ENCODE measurements at regions of chr12 and their contacts with region 1.

Region 1: DNA sequence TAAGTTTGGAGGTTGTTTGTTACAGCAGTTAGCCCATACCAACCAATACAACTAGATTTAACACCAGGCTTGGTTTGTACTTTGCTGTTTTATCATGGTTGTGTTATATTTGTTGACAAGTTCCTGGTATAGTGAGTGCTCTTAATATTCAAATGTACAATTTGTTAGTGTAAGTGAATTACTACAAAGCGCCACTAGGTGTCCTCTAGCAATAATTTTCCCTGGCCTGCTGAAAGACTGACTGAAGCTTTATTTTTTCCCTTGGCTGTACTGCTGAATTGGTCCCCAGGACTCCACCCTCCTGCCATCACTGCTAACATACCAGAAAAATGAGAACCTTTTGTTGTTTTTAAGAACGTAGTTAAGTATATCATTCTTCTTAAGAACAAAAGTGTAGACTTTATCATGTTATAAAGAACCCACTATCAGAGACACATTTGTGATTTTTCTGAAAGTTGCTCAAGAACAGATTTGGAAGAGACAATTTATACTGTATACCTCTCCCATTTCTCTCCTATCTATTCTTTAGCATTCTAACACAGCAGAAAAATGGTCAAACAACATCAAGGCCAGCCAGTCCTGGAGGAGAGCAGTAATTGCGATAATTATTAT is 75.3 kb upstream of the FAR2 start:
- DNase-seq: peak; percentile 42
- H3K4me3 ChIP-seq: no peak overlapping the region
- H3K27ac ChIP-seq: no peak overlapping the region
- H3K4me1 ChIP-seq: no peaks in the 10 kb centered on the region; a peak in 2 of 4 replicates
- H3K27me3 ChIP-seq: no peaks in the 10 kb centered on the region
- CTCF ChIP-seq: peak; percentile 71
- EP300 ChIP-seq: no peak
- RAD21 ChIP-seq: peak; percentile 83

Region 2: DNA sequence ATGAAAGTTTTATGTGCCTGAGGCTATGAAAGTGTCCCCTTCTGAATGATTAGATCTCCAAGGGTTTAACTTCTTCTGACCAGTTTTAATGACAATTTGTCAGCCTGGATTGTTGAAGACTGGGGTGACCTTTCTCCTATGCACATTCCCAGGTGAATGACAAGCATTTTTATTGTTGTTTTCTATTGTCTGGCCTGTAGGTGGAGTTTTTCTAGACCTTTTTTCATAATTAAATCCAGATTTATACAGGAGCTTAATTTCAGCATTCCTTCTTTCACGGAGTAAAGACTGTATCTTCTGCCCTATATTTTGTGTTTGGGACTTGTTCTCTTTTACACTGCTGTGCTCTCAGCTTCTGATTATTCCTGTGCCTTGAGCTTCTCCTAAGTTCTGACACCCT is 49.6 kb before region 1 on chr12:
- CTCF ChIA-PET with region 1: interaction called, 10 read pairs
- POLR2A ChIA-PET with region 1: no interaction called
- DNase-seq: peak; percentile 8
- H3K4me3 ChIP-seq: no peak overlapping the region
- H3K27ac ChIP-seq: no peak overlapping the region
- H3K4me1 ChIP-seq: peaks cover 0 to 3% of the 10 kb centered on the region in 2 experiments; a peak in 2 of 4 replicates
- H3K27me3 ChIP-seq: no peaks in the 10 kb centered on the region
- CTCF ChIP-seq: peak; percentile 42
- EP300 ChIP-seq: no peak
- RAD21 ChIP-seq: peak; percentile 15; the same call in 1 of the 2 replicates

Region 3: GRCh38 chr12:29088611-29089219 is 15.0 kb after region 1 on chr12:
- CTCF ChIA-PET with region 1: interaction called, 14 read pairs
- POLR2A ChIA-PET with region 1: no interaction called
- DNase-seq: peak; percentile 22
- H3K4me3 ChIP-seq: no peak overlapping the region
- H3K27ac ChIP-seq: no peak overlapping the region
- H3K4me1 ChIP-seq: no peaks in the 10 kb centered on the region
- H3K27me3 ChIP-seq: no peaks in the 10 kb centered on the region
- CTCF ChIP-seq: peak; percentile 51
- EP300 ChIP-seq: no peak
- RAD21 ChIP-seq: peak; percentile 46

Region 4: GRCh38 chr12:29226616-29227015 is 152.9 kb after region 1 on chr12:
- CTCF ChIA-PET with region 1: no interaction called
- POLR2A ChIA-PET with region 1: no interaction called
- DNase-seq: no peak
- H3K4me3 ChIP-seq: no peak overlapping the region
- H3K27ac ChIP-seq: no peak overlapping the region
- H3K4me1 ChIP-seq: peaks cover 0 to 5% of the 10 kb centered on the region in 2 experiments; a peak in 3 of 4 replicates
- H3K27me3 ChIP-seq: no peaks in the 10 kb centered on the region
- CTCF ChIP-seq: no peak
- EP300 ChIP-seq: no peak
- RAD21 ChIP-seq: no peak

Measured in SK-N-SH (cell line).